Lower leg skin (tissue), 4 donors: ENCODE measurements at regions of chr12 and their contacts with region 1.

Region 1: DNA sequence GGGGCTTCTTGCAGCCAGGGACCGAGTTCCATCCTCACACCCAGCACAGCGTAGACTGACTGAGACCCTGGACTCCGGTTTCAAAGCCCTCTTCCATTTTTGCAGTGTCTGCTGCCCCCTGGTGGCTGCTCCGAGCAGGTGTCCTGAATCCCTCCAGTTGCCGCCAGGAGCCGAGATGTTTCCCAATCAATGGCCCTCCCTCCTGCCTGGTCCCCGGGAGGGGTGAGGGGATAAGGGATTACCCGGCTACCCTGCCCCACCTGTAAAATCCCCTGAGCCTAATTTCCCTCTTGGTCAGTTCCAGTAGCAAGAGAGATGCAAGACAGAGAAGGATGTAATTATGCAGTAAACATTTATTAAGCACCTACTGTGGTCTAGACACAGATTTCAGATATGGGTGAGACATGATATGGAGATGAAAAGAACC is 55.0 kb downstream of the PHETA1 start:
- DNase-seq: peak; percentile 36 to 91
- H3K4me3 ChIP-seq: no peak overlapping the region
- CTCF ChIP-seq: no peak
- POLR2A ChIP-seq: no peak

Region 2: DNA sequence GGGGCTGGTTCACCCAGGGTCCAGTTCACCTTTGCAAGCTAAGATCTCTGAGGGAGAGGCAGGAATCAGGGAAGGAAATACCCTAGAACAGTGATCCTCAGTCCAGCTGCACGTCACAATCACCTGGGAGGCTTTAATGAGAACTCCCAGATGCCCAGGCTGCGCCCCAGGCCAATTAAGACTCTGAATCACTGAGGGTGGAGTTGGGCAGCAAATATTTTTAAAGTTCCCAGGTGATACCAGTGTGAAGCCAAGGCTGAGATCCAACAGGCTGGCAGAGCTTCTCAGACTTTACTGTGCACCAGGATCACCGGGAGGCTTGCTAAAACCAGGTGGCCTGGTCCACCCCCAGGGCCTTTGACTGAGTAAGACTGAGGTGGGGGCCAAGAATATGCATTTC is 417.3 kb before region 1 on chr12:
- intact Hi-C with region 1: loop called (anchors 10 kb)
- DNase-seq: peak in 1 of 2 donors; percentile 25
- H3K4me3 ChIP-seq: no peak overlapping the region
- CTCF ChIP-seq: no peak
- POLR2A ChIP-seq: no peak

Region 3: DNA sequence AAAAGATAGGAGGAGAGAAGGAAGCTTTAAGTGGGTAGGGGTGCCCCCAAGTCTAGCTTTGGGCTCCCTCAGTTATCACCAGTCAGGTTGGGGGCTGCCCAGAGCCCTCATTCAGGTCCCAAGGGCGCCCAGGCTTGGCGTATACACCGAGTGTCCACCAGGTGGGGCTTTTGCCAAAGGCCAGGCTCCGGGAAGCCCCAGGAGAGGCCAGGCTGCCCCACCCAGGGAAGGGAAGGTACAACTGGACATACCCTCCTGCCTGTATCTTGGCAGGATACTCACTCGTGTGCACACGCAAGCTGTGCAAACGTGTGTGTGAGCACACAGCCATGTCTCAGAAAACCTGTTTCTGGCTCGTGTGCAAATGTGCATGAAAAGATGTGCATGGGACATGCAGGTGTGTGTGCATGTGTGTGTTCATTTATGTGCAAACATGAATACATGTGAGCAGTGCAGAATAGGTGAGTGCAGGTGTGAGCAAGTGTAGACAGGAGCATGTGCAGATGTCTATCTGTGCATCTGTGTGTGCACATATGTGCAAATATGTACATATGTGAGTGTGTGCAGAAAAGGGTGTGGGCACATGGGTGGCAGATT is 289.5 kb before region 1 on chr12:
- intact Hi-C with region 1: loop called (anchors 10 kb)
- DNase-seq: peak in 1 of 2 donors; percentile 19
- H3K4me3 ChIP-seq: no peak overlapping the region
- CTCF ChIP-seq: no peak
- POLR2A ChIP-seq: no peak

Region 4: GRCh38 chr12:111819191-111820150 is 505.6 kb after region 1 on chr12:
- intact Hi-C with region 1: no loop called
- DNase-seq: peak in 1 of 2 donors; percentile 52
- H3K4me3 ChIP-seq: no peak overlapping the region
- CTCF ChIP-seq: no peak
- POLR2A ChIP-seq: no peak